Transverse colon (tissue), 4 donors: ENCODE measurements at regions of chr4 and their contacts with region 1.

Region 1: DNA sequence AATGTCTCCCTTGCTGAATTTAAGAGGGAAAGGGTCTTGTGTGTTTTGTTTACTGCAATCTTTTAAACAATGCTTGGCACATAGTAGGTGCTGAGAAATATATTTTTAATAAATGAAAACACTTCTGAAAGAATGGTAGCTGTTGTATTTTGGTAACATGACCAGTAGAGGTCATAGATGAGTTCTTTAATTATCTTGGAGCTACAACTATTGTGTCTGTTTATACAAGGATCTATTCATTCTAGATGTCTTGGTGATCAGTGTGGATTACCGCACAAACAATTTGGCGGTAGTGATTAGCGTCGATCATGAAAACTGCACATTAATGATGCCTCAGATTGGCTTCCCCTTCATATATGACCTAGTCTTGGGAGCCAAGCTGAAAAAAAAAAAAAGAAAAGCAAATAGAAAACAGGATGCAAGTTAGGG is 21.4 kb upstream of the SCRG1 start:
- DNase-seq: no peak
- H3K4me3 ChIP-seq: no peak overlapping the region
- H3K27ac ChIP-seq: no peak overlapping the region
- H3K4me1 ChIP-seq: peaks cover 0 to 5% (median under 1%) of the 10 kb centered on the region in 4 donors
- H3K27me3 ChIP-seq: no peaks in the 10 kb centered on the region
- CTCF ChIP-seq: peak; percentile 37 to 65 (median 43)
- EP300 ChIP-seq: no peak
- POLR2A ChIP-seq: no peak

Region 2: DNA sequence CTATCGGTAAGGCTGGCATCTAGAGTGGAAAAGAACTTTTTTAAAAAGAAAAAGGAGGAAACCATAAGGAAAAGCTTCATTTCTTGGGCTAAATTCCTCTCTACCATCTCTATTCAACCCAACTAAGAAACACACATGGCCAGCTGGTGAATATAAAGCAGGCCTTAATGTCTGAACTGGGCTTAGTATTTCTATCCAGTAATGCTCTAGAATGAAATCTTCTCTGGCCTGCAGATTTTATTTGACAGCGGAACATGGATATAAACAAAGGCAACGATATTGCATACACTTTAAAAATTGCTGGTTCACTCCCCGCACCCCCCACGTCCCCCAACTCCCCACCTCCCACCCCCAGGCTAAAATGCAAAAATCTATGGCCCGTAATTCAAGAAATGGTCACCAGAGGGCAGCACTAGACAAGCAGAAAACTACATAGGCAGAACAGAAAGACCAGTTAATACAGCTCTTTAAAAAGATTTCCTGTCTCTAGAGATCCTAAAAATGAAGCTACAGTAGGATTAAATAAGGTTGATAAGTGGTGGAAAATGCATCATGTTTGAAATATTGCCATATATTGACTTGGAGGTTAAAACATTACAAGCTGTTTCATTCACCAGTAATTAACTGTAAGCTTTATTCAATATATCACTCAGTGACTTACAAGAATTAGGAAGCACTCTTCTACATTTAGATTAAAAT is 407.0 kb before region 1 on chr4:
- in situ Hi-C with region 1: loop called in 3 of 4 experiments (anchors 10 to 25 kb)
- intact Hi-C with region 1: no loop called
- DNase-seq: peak; percentile 36
- H3K4me3 ChIP-seq: no peak overlapping the region
- H3K27ac ChIP-seq: no peak overlapping the region
- H3K4me1 ChIP-seq: peaks cover 0 to 6% (median 0%) of the 10 kb centered on the region in 4 donors
- H3K27me3 ChIP-seq: no peaks in the 10 kb centered on the region
- CTCF ChIP-seq: peak; percentile 61 to 84 (median 80)
- EP300 ChIP-seq: no peak
- POLR2A ChIP-seq: no peak

Region 3: GRCh38 chr4:173168396-173169177 is 251.8 kb before region 1 on chr4 and contains the start of gene GALNT7:
- in situ Hi-C with region 1: loop called in 1 of 4 experiments (anchors 25 kb)
- intact Hi-C with region 1: no loop called
- DNase-seq: peak; percentile 83
- H3K4me3 ChIP-seq: peak within 1 kb of the TSS; percentile 89 to 98 (median 92)
- H3K27ac ChIP-seq: peak within 1 kb of the TSS; percentile 96 to 98 (median 98)
- H3K4me1 ChIP-seq: peaks cover 8 to 26% (median 21%) of the 10 kb centered on the region in 4 donors
- H3K27me3 ChIP-seq: no peaks in the 10 kb centered on the region
- CTCF ChIP-seq: no peak
- EP300 ChIP-seq: no peak
- POLR2A ChIP-seq: no peak
- total RNA-seq, gene GALNT7: 31.4 to 124 (median 105) TPM

Region 4: GRCh38 chr4:173318648-173319211 is 101.6 kb before region 1 on chr4:
- in situ Hi-C with region 1: loop called in 3 of 4 experiments (anchors 5 to 10 kb)
- intact Hi-C with region 1: loop called (anchors 5 kb)
- DNase-seq: no peak
- H3K4me3 ChIP-seq: no peak overlapping the region
- H3K27ac ChIP-seq: no peak overlapping the region
- H3K4me1 ChIP-seq: no peaks in the 10 kb centered on the region
- H3K27me3 ChIP-seq: no peaks in the 10 kb centered on the region
- CTCF ChIP-seq: peak in 4 of 5 experiments; percentile 35 to 49 (median 41)
- EP300 ChIP-seq: no peak
- POLR2A ChIP-seq: no peak

Region 5: DNA sequence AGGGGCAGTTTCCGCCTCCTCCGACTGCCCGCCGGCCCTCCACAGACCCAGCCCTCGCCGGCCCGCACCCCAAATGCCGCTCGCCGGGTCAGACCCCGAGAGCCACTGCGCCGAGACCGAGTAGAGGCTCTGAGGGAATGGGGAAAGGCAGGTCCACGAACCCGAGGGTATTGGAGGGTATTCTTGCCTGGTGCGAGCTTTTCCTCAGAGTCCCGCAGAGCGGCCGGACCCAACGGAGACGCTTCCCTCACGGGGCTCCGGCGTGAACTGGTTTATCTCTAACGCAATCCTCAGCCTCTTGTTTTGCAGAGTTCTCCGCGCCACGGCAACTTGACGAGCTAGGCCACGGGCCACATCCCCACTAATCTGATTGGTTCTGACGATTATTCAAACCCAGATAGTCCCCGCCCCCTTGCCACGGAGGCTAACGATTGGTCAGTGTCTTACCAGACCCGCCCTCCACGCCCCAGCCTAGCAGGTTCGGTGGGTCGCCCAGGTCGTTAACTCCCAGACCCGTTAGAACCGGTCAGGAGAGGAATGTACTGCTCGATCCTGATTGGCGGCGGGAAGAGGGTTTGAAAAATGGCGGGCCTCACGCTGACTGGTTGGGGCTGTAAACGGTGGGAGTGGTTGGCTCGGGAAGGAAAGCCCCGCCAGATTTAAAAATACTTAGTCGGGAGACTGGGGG is 86.1 kb before region 1 on chr4 and contains the start of gene HMGB2:
- in situ Hi-C with region 1: no loop called
- intact Hi-C with region 1: loop called (anchors 5 kb)
- DNase-seq: peak; percentile 100
- H3K4me3 ChIP-seq: peak within 1 kb of the TSS; percentile 62 to 97 (median 86)
- H3K27ac ChIP-seq: peak within 1 kb of the TSS; percentile 97 to 99 (median 98)
- H3K4me1 ChIP-seq: peaks cover 3 to 32% (median 19%) of the 10 kb centered on the region in 4 donors
- H3K27me3 ChIP-seq: no peaks in the 10 kb centered on the region
- CTCF ChIP-seq: no peak
- EP300 ChIP-seq: no peak
- POLR2A ChIP-seq: peak; percentile 99
- total RNA-seq, gene HMGB2: 9.4 to 34.9 (median 29.1) TPM

Region 6: GRCh38 chr4:173494013-173494970 is 74.0 kb after region 1 on chr4:
- in situ Hi-C with region 1: loop called in 3 of 4 experiments (anchors 10 kb)
- intact Hi-C with region 1: loop called (anchors 2 kb)
- DNase-seq: peak; percentile 71
- H3K4me3 ChIP-seq: peak overlapping the region in 3 of 4 donors; percentile 20 to 49 (median 31)
- H3K27ac ChIP-seq: no peak overlapping the region
- H3K4me1 ChIP-seq: peaks cover 0 to 24% (median 5%) of the 10 kb centered on the region in 4 donors
- H3K27me3 ChIP-seq: peaks cover 22% of the 10 kb centered on the region
- CTCF ChIP-seq: peak; percentile 70 to 78 (median 76)
- EP300 ChIP-seq: no peak
- POLR2A ChIP-seq: no peak

Region 7: DNA sequence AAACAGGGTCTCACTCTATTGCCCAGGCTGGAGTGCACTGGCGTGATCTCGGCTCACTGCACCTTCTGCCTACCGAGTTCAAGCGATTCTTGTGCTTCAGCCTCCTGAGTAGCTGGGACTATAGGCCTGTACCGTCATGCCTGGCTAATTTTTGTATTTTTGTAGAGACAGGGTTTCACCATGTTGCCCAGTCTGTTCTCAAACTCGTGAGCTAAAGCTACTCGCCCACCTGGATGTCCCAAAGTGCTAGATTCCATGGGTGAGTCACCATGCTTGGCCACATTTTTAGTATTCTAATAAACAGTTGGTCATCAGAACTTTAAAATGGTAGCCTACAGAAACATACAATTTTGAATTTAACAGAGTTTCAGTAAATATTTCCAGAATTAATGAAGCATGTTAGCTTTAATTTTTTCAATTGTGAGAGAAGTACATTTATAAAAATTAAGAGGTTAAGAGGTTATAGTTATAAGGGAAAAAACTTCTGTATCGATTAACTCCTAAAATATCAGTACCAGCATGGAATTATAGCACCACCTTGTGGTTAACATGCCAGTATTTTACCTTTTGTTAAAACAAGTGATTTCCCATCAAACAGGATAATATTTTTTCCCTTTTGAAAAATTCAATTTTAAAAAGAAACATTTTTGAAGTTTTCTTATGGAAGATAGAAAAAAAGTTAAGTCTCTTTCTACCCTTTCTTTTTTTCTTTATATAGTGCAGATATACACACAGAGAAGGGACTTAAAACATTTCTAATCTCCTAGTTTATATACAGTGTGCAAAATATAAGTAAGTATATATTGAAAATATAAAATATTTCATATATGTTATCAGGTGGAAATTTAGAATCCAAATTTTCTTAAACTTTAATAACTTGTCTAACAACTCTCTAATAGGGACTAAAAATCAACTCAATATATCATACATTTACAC is 898.8 kb after region 1 on chr4:
- in situ Hi-C with region 1: loop called in 1 of 4 experiments (anchors 25 kb)
- intact Hi-C with region 1: no loop called
- DNase-seq: no peak
- H3K4me3 ChIP-seq: no peak overlapping the region
- H3K27ac ChIP-seq: no peak overlapping the region
- H3K4me1 ChIP-seq: peaks cover 0 to 4% (median 0%) of the 10 kb centered on the region in 4 donors
- H3K27me3 ChIP-seq: no peaks in the 10 kb centered on the region
- CTCF ChIP-seq: peak; percentile 57 to 79 (median 72)
- EP300 ChIP-seq: no peak
- POLR2A ChIP-seq: no peak